Caco-2 (cell line): ENCODE measurements at regions of chr4 and their contacts with region 1.

Region 1: GRCh38 chr4:73948990-73949706 is 32.7 kb downstream of the PF4 start:
- DNase-seq: no peak
- H3K4me3 ChIP-seq: no peak overlapping the region
- H3K4me3 Mint-ChIP-seq: no peak overlapping the region
- H3K27ac Mint-ChIP-seq: no peak overlapping the region
- H3K4me1 ChIP-seq: no peaks in the 10 kb centered on the region
- H3K4me1 Mint-ChIP-seq: peaks cover 10% of the 10 kb centered on the region
- H3K27me3 ChIP-seq: no peaks in the 10 kb centered on the region
- H3K27me3 Mint-ChIP-seq: no peaks in the 10 kb centered on the region
- CTCF ChIP-seq: no peak

Region 2: DNA sequence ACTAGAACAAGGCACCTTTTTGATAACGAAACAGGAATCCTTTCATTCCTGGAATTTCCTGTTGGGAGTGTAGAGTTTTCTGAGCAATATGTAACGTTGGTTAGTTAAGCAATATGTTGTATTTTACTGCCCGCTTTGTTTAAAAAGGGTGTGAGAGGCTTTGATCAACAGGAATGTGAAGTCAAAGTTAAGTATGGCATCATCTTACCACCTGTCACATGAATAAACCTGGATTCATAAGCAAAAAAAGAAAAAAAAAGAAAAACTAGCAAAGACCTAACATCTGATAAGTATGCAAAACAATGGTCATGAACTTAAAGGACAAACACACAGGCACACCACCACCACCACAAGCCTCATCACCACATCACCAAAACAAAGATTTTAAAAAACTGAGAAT is 56.4 kb after region 1 on chr4:
- CTCF ChIA-PET with region 1: no interaction called
- POLR2A ChIA-PET with region 1: no interaction called
- intact Hi-C with region 1: loop called (anchors 2 kb)
- DNase-seq: peak in 1 of 2 experiments; percentile 68
- H3K4me3 ChIP-seq: no peak overlapping the region
- H3K4me3 Mint-ChIP-seq: peak overlapping the region; percentile 53
- H3K27ac Mint-ChIP-seq: peak overlapping the region; percentile 93
- H3K4me1 ChIP-seq: peaks cover 38% of the 10 kb centered on the region
- H3K4me1 Mint-ChIP-seq: peaks cover 15% of the 10 kb centered on the region
- H3K27me3 ChIP-seq: no peaks in the 10 kb centered on the region
- H3K27me3 Mint-ChIP-seq: no peaks in the 10 kb centered on the region
- CTCF ChIP-seq: no peak